SK-N-SH (cell line): ENCODE measurements at regions of chr19 and their contacts with region 1.

Region 1: DNA sequence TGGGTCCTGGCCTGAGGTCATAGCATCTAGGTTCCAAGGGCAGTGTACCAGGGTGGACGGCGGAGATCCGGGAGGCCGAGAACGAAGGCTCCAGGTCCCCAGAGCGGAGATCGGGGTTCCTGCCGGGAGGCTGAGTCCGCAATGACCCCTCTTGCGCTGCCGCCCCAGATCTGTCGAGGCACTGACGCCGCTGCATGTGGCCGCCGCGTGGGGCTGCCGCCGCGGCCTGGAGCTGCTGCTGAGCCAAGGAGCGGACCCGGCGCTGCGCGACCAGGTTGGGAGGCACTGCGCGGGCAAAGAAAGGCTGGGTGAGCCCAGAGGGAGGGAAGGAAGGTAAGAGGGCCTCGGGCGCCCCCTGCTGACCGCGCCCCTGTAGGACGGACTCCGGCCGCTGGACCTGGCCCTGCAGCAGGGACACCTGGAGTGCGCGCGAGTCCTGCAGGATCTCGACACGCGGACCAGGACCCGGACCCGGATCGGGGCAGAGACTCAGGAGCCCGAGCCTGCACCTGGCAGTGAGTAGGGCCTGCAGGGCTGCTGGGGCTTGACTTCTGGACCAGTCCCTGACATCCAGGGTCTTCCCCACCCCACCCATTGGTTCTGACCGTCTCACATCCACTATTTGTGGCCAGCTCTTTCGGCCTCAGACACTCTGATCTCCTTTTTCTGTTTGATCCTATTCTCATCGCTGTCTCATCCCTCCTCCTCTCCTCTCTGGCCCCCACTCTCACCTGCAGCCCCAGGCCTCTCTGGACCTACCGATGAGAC is 971 bp downstream of the ANKLE1 start:
- DNase-seq: peak; percentile 94
- H3K4me3 ChIP-seq: peak overlapping the region; percentile 36 to 62
- H3K27ac ChIP-seq: peak overlapping the region in 1 of 2 experiments; percentile 17; a peak in 1 of 4 replicates
- H3K4me1 ChIP-seq: peaks cover 0 to 2% of the 10 kb centered on the region in 2 experiments; a peak in 1 of 4 replicates
- H3K27me3 ChIP-seq: no peaks in the 10 kb centered on the region
- CTCF ChIP-seq: peak; percentile 84
- EP300 ChIP-seq: peak; percentile 17 to 23; a peak in 1 of 4 replicates
- RAD21 ChIP-seq: peak; percentile 89

Region 2: GRCh38 chr19:17069218-17069617 is 213.5 kb before region 1 on chr19:
- CTCF ChIA-PET with region 1: interaction called, 32 read pairs
- POLR2A ChIA-PET with region 1: no interaction called
- DNase-seq: no peak
- H3K4me3 ChIP-seq: no peak overlapping the region
- H3K27ac ChIP-seq: no peak overlapping the region
- H3K4me1 ChIP-seq: peaks cover 0 to 3% of the 10 kb centered on the region in 2 experiments; a peak in 1 of 4 replicates
- H3K27me3 ChIP-seq: no peaks in the 10 kb centered on the region
- CTCF ChIP-seq: no peak
- EP300 ChIP-seq: no peak
- RAD21 ChIP-seq: no peak

Region 3: GRCh38 chr19:17205237-17206140 is 77.2 kb before region 1 on chr19:
- CTCF ChIA-PET with region 1: interaction called, 22 read pairs
- POLR2A ChIA-PET with region 1: no interaction called
- DNase-seq: peak; percentile 74
- H3K4me3 ChIP-seq: no peak overlapping the region
- H3K27ac ChIP-seq: no peak overlapping the region
- H3K4me1 ChIP-seq: no peaks in the 10 kb centered on the region
- H3K27me3 ChIP-seq: no peaks in the 10 kb centered on the region
- CTCF ChIP-seq: peak; percentile 61
- EP300 ChIP-seq: no peak
- RAD21 ChIP-seq: peak; percentile 68

Region 4: DNA sequence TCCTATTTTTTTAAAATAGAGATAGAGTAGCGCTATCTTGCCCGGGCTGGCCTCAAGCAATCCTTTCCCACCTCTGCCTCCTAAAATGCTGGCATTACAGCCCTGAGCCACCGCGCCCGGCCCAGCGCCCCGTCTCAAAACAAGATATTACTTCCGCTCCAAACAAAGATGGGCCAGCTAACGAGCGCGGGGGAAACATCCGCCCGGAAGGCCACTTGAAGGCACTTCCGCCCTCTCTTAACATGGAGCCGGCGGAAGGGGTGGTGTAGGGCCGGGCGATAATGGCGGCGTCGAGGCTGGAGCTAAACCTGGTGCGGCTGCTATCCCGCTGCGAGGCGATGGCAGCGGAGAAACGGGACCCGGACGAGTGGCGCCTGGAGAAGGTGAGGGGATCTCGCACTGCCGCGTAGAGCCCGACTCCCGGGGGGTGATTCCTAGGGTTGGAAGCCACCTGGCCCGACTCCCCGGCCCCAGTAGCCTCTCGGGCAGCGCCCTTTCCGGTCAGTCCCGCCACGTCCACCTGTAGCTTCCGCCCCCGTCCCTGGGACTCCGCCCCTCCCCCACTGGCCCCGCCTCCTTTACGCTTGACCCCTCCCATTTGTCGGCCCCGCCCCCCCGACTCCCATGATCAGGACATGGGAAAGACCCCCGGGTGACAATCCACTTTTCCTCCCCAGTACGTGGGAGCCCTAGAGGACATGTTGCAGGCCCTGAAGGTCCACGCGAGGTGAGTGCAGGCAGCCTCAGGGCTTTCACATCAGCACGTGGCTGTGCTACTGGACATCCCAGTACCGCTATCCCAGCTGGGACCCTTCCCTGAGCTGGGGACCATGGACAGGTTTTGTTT is 67.3 kb before region 1 on chr19 and contains the start of gene USE1:
- CTCF ChIA-PET with region 1: interaction called, 21 read pairs
- POLR2A ChIA-PET with region 1: interaction called, 16 read pairs
- DNase-seq: peak; percentile 97
- H3K4me3 ChIP-seq: peak within 1 kb of the TSS; percentile 71 to 73
- H3K27ac ChIP-seq: peak within 1 kb of the TSS; percentile 89 to 96
- H3K4me1 ChIP-seq: peaks cover 5 to 14% of the 10 kb centered on the region in 2 experiments
- H3K27me3 ChIP-seq: no peaks in the 10 kb centered on the region
- CTCF ChIP-seq: no peak
- EP300 ChIP-seq: peak in 1 of 2 experiments; percentile 53; a peak in 1 of 4 replicates
- RAD21 ChIP-seq: no peak
- polyA plus RNA-seq, gene USE1: 63.9 and 81.8 TPM in 2 replicates

Region 5: DNA sequence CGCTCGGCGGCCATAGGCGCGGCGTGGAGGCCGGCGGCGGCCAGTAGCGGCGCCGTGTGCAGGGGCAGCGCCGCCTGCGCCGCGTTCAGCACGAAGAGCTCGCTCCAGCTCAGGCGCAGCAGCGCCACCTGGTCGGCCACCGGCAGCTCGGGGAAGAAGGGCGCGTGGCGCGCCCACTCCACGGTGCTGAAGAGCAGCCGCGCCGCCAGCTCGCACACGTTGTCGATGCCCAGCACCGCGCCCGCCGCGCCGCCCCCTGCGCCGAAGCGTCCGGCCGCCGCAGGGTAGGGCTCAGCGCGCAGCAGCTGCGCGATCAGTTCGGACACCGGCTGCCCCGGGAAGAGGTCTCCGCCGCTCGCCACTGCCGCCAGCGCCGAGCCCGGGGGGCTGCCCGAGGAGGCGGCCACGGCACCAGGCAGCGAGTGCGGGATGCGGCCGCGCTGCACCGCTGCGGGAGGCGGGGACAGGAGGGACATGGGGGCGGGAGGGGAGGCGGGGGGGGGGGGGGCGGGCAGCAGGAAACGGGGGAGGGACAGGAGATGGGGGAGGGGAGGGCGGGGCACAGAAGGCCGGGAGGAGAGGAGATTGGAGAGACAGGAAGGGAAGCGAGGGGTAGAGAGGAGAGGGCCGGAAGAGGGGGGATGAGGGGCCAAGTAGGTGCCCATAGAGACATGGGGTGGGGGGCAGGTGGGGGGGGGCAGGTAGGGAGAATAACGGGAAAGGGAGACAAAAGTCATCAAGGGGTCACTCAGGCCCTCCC is 46.9 kb before region 1 on chr19:
- CTCF ChIA-PET with region 1: interaction called, 29 read pairs
- POLR2A ChIA-PET with region 1: no interaction called
- DNase-seq: peak; percentile 90
- H3K4me3 ChIP-seq: peak overlapping the region; percentile 53 to 70
- H3K27ac ChIP-seq: peak overlapping the region; percentile 48 to 84
- H3K4me1 ChIP-seq: peaks cover 13 to 24% of the 10 kb centered on the region in 2 experiments; a peak in 3 of 4 replicates
- H3K27me3 ChIP-seq: no peaks in the 10 kb centered on the region
- CTCF ChIP-seq: peak; percentile 49
- EP300 ChIP-seq: no peak
- RAD21 ChIP-seq: peak; percentile 56

Region 6: DNA sequence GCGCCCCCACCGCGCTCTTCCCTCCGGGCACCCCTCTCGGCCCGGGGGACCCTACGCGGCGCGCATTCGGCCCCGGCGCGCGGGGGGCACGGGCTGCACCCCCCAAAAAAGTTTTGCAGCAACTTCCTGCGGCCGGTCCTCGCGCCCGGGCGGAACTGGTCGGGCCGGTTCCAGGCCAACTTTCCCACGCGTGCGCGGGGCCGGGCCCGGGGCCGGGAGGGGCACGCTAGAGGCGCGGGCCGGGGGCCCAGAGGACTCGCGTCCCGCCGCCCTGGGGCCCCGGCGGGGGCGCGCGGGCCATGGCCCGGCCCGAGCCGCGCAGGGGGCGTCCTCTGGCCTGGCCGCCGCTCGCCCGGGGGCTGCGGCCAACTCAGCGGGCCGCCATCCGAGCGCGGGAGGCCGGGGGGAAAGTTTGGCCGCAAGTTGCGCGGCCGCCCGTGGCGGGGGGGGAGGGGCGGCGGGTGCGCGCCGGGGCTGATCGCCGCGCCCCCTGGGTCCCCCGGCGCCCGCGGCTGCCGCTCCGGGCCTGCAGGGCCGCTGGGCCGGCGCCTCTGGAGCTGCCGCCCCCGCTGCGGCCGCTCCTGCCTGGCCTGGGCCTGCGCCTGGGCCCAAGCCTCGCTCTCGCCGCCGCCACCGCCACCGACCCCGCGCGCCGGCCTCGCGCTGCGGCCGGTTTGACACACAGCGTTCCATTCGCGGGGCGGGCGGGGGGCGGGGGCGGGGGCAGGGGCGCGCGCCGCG is 37.3 kb before region 1 on chr19 and contains the start of gene NR2F6:
- CTCF ChIA-PET with region 1: interaction called, 13 read pairs
- POLR2A ChIA-PET with region 1: interaction called, 11 read pairs
- DNase-seq: no peak
- H3K4me3 ChIP-seq: peak within 1 kb of the TSS; percentile 92 to 97
- H3K27ac ChIP-seq: peak within 1 kb of the TSS; percentile 22 to 81; a peak in 3 of 4 replicates
- H3K4me1 ChIP-seq: peaks cover 6 to 26% of the 10 kb centered on the region in 2 experiments; a peak in 2 of 4 replicates
- H3K27me3 ChIP-seq: no peaks in the 10 kb centered on the region
- CTCF ChIP-seq: no peak
- EP300 ChIP-seq: no peak
- RAD21 ChIP-seq: no peak
- polyA plus RNA-seq, gene NR2F6: 31.7 and 37.3 TPM in 2 replicates

Region 7: DNA sequence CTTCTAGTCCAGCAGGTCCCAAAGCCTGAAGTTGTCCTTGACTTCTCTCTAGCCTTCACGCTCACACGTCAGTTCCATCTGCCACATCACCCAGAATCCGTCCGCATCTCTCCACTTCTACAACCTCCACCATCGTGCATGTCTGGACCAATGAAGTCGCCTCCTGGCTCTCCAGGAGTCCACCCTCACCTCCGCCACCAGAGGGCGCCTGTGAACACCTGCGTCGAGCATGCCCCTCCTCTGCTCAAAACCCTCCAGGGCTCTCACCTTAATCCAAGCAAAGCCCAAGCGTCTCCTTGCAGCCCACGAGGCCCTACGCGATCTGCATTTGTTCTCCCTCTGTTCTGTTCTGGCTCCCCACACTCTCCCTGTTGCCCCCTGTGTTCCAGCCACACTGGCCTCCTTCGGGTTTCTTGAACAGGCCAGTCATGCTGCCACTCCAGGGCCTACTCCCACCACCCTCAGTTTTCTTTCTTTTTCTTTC is 21.8 kb before region 1 on chr19:
- CTCF ChIA-PET with region 1: interaction called, 11 read pairs
- POLR2A ChIA-PET with region 1: interaction called, 3 read pairs
- DNase-seq: peak; percentile 87
- H3K4me3 ChIP-seq: no peak overlapping the region
- H3K27ac ChIP-seq: no peak overlapping the region
- H3K4me1 ChIP-seq: no peaks in the 10 kb centered on the region
- H3K27me3 ChIP-seq: no peaks in the 10 kb centered on the region
- CTCF ChIP-seq: peak; percentile 71
- EP300 ChIP-seq: no peak
- RAD21 ChIP-seq: peak; percentile 41

Region 8: DNA sequence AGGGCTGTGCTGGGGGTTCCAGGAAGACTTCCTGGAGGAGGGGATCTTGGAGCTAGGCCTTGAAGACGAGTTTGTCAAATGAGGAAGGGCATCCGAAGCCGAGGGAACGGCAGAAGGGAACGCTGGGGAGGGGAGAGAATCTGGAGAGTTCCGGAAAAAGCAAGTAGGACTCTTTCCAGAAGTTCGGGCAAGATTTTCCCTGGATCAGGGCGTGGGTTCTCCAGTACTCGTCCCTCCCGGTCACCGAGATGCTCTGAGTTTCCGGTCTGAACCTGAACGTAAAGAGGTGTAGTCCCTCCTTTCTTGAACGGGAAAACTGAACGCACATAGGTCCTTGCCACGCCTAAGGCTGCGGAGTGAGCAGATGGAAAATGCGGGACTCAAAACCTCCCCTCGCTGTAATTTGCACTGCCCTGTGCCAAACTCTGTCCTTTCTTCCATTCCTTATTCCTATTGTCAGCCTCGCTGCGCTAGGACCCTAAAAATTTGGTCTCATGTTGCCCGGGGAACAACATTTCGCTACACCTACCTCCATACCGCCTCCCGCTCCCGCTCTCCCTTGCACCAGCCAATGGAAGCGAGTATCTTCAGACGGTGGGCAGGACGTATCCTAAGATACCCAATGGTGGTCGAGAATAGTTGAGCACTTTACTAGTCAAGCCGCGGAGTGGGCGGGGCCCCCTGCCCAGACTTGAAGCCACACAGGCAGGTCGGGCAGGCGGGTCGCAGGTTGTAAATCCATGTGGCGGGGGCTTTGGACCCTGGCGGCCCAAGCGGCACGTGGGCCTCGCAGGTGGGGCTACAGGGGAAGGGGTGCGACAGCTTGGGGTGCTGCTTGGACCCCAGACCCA is 54.4 kb after region 1 on chr19 and contains the start of gene GTPBP3:
- CTCF ChIA-PET with region 1: no interaction called
- POLR2A ChIA-PET with region 1: no interaction called
- DNase-seq: peak; percentile 95
- H3K4me3 ChIP-seq: peak within 1 kb of the TSS; percentile 91 to 99
- H3K27ac ChIP-seq: peak within 1 kb of the TSS; percentile 82 to 96
- H3K4me1 ChIP-seq: peaks cover 0 to 24% of the 10 kb centered on the region in 2 experiments; a peak in 1 of 4 replicates
- H3K27me3 ChIP-seq: no peaks in the 10 kb centered on the region
- CTCF ChIP-seq: no peak
- EP300 ChIP-seq: no peak
- RAD21 ChIP-seq: no peak
- polyA plus RNA-seq, gene GTPBP3: 21.6 and 22.4 TPM in 2 replicates

Region 9: DNA sequence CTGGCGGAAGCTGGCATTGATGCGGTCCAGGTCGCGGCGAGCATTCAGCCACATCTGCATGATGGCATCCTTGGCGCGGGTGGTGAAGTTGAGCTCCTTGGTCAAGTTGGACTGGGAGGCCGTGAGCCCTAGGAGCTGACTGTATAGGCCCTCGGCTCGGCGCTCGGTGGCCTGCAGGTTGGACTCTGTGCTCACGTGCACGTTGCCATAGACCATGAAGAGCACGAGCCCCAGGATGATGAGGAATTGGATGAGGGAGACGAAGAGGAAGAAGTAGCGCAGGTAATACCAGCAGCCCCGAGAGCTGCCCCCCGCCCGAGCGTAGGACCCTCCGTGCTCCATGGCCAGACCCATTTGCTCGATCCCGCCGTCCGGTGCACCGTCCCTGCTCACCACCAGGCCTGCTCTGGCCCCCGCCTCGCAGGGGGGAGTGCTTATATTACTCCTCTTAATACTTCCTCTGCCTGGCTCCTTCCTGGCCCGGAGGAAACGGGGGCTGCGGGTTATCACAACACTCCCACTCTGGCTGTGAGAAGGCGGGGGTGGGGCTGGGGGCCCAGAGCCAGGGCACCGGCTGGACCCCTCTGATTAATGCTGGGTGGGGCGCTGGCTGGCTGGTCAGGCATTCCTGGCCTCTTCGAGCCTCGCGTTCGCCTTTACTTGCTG is 94.4 kb after region 1 on chr19 and contains the start of gene PLVAP:
- CTCF ChIA-PET with region 1: no interaction called
- POLR2A ChIA-PET with region 1: no interaction called
- DNase-seq: no peak
- H3K4me3 ChIP-seq: no peak within 1 kb of the TSS
- H3K27ac ChIP-seq: no peak within 1 kb of the TSS
- H3K4me1 ChIP-seq: no peaks in the 10 kb centered on the region
- H3K27me3 ChIP-seq: no peaks in the 10 kb centered on the region
- CTCF ChIP-seq: no peak
- EP300 ChIP-seq: no peak
- RAD21 ChIP-seq: no peak
- polyA plus RNA-seq, gene PLVAP: not detected in 2 replicates

Region 10: DNA sequence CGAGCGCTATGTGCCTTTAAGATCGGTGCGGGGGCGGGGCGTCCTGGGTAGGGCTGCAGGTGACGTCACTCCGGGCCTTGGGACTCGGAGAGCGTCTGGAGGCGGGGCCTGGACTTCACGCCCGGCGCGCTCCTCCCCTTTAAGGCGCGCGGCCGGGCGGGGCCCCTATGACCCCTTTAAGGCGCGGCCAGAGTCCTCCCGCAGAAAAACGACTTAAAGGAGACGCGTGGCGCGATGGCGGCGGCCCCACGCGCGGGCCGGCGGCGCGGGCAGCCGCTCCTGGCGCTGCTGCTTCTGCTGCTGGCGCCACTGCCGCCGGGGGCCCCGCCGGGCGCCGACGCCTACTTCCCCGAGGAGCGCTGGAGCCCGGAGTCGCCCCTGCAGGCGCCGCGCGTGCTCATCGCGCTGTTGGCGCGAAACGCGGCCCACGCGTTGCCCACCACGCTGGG is 272.8 kb after region 1 on chr19 and contains the start of gene COLGALT1:
- CTCF ChIA-PET with region 1: no interaction called
- POLR2A ChIA-PET with region 1: no interaction called
- DNase-seq: peak; percentile 99
- H3K4me3 ChIP-seq: peak within 1 kb of the TSS; percentile 76 to 93
- H3K27ac ChIP-seq: peak within 1 kb of the TSS; percentile 35 to 67; a peak in 3 of 4 replicates
- H3K4me1 ChIP-seq: peaks cover 0 to 7% of the 10 kb centered on the region in 2 experiments; a peak in 2 of 4 replicates
- H3K27me3 ChIP-seq: no peaks in the 10 kb centered on the region
- CTCF ChIP-seq: no peak
- EP300 ChIP-seq: no peak
- RAD21 ChIP-seq: no peak
- polyA plus RNA-seq, gene COLGALT1: 75.9 and 83.8 TPM in 2 replicates